GM12878 (cell line): ENCODE measurements at regions of chr7 and their contacts with region 1.

Region 1: GRCh38 chr7:24812310-24812945 is 55.2 kb upstream of the GSDME start:
- DNase-seq: no peak
- ATAC-seq: peak; percentile 97
- H3K4me3 ChIP-seq: no peak overlapping the region
- H3K27ac ChIP-seq: no peak overlapping the region
- H3K4me1 ChIP-seq: no peaks in the 10 kb centered on the region
- H3K27me3 ChIP-seq: no peaks in the 10 kb centered on the region
- CTCF ChIP-seq: peak; percentile 78 to 81 (median 81)
- EP300 ChIP-seq: no peak
- POLR2A ChIP-seq: no peak
- RAD21 ChIP-seq: peak; percentile 78

Region 2: GRCh38 chr7:24794751-24795731 is 17.4 kb before region 1 on chr7:
- CTCF ChIA-PET with region 1: interaction called, 11 read pairs
- POLR2A ChIA-PET with region 1: no interaction called
- RAD21 ChIA-PET with region 1: interaction called, 4 read pairs
- SMC1A ChIA-PET with region 1: interaction called, 3 read pairs
- in situ Hi-C with region 1: no loop called
- intact Hi-C with region 1: no loop called
- DNase-seq: no peak
- ATAC-seq: no peak
- H3K4me3 ChIP-seq: no peak overlapping the region
- H3K27ac ChIP-seq: no peak overlapping the region
- H3K4me1 ChIP-seq: no peaks in the 10 kb centered on the region
- H3K27me3 ChIP-seq: no peaks in the 10 kb centered on the region
- CTCF ChIP-seq: no peak
- EP300 ChIP-seq: no peak
- POLR2A ChIP-seq: no peak
- RAD21 ChIP-seq: no peak

Region 3: DNA sequence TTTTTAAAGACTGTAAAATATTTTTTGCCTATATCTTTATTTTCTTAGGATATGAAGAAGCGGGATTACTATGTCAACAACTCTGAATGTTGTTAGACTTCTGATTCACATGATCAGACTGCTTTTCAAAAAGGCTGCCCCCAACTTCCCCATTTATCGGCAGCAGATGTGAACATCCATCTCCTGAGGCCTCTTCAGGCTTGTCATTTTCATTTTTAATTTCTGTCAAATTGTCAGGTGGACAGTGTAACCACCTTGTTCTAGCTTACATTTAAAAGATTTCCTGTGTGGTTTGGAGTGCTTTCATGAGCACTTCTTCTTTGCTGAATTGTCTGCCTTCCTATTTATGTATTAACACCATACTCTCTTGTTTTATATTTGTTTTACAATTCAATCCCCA is 23.7 kb after region 1 on chr7:
- CTCF ChIA-PET with region 1: interaction called, 11 read pairs
- POLR2A ChIA-PET with region 1: no interaction called
- RAD21 ChIA-PET with region 1: interaction called, 3 read pairs
- SMC1A ChIA-PET with region 1: interaction called, 5 read pairs
- in situ Hi-C with region 1: no loop called
- intact Hi-C with region 1: no loop called
- DNase-seq: peak; percentile 76
- ATAC-seq: peak; percentile 85
- H3K4me3 ChIP-seq: 0 out of 2 replicates have a peak overlapping the region, but pooled peaks have one; percentile 9
- H3K27ac ChIP-seq: peak overlapping the region; percentile 29; the same call in 1 of the 2 replicates
- H3K4me1 ChIP-seq: peaks cover 48% of the 10 kb centered on the region
- H3K27me3 ChIP-seq: no peaks in the 10 kb centered on the region
- CTCF ChIP-seq: no peak
- EP300 ChIP-seq: peak; percentile 60 to 70; a peak in 3 of 4 replicates
- POLR2A ChIP-seq: no peak
- RAD21 ChIP-seq: no peak

Region 4: GRCh38 chr7:24971333-24972165 is 159.1 kb after region 1 on chr7:
- CTCF ChIA-PET with region 1: interaction called, 46 read pairs
- POLR2A ChIA-PET with region 1: no interaction called
- RAD21 ChIA-PET with region 1: interaction called, 3 read pairs
- SMC1A ChIA-PET with region 1: no interaction called
- in situ Hi-C with region 1: no loop called
- intact Hi-C with region 1: no loop called
- DNase-seq: no peak
- ATAC-seq: peak; percentile 28
- H3K4me3 ChIP-seq: no peak overlapping the region
- H3K27ac ChIP-seq: peak overlapping the region; percentile 7
- H3K4me1 ChIP-seq: peaks cover 37% of the 10 kb centered on the region
- H3K27me3 ChIP-seq: no peaks in the 10 kb centered on the region
- CTCF ChIP-seq: no peak
- EP300 ChIP-seq: no peak
- POLR2A ChIP-seq: no peak
- RAD21 ChIP-seq: no peak

Region 5: DNA sequence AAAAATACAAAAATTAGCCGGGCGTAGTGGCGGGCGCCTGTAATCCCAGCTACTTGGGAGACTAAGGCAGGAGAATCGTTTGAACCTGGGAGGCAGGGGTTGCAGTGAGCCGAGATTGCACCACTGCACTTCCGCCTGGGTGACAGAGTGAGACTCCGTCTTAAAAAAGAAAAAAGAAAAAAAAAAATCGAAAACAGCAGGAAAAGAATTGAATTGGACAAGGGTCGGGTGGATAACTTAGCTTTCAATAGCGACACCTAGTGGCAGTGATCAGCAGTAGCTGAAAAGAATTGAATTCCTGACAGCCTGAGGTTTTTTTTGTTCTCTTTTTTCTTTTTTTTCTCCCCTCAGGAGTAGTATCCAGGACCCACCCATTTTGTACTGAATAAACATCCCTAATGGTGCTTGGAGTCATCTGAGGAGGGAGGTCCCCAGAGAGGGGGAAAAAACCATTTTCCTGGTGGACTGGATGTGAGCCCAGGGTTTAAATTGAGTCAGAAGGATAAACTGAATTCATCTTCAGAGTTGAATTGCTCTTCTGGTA is 257.5 kb after region 1 on chr7:
- CTCF ChIA-PET with region 1: interaction called, 119 read pairs
- POLR2A ChIA-PET with region 1: no interaction called
- RAD21 ChIA-PET with region 1: interaction called, 42 read pairs
- SMC1A ChIA-PET with region 1: interaction called, 63 read pairs
- in situ Hi-C with region 1: no loop called
- intact Hi-C with region 1: loop called (anchors 1 kb)
- DNase-seq: no peak
- ATAC-seq: peak; percentile 79
- H3K4me3 ChIP-seq: no peak overlapping the region
- H3K27ac ChIP-seq: no peak overlapping the region
- H3K4me1 ChIP-seq: no peaks in the 10 kb centered on the region
- H3K27me3 ChIP-seq: no peaks in the 10 kb centered on the region; a peak in 1 of 4 replicates
- CTCF ChIP-seq: peak; percentile 72 to 82 (median 78)
- EP300 ChIP-seq: no peak
- POLR2A ChIP-seq: no peak
- RAD21 ChIP-seq: peak; percentile 86

Region 6: GRCh38 chr7:25093268-25093826 is 280.9 kb after region 1 on chr7:
- CTCF ChIA-PET with region 1: interaction called, 290 read pairs
- POLR2A ChIA-PET with region 1: interaction called, 4 read pairs
- RAD21 ChIA-PET with region 1: interaction called, 120 read pairs
- SMC1A ChIA-PET with region 1: interaction called, 160 read pairs
- in situ Hi-C with region 1: loop called (anchors 5 kb)
- intact Hi-C with region 1: loop called (anchors 1 kb)
- DNase-seq: no peak
- ATAC-seq: peak; percentile 96
- H3K4me3 ChIP-seq: no peak overlapping the region
- H3K27ac ChIP-seq: no peak overlapping the region
- H3K4me1 ChIP-seq: peaks cover 4% of the 10 kb centered on the region
- H3K27me3 ChIP-seq: no peaks in the 10 kb centered on the region
- CTCF ChIP-seq: peak; percentile 84 to 90 (median 89)
- EP300 ChIP-seq: no peak
- POLR2A ChIP-seq: no peak
- RAD21 ChIP-seq: peak; percentile 90